Gastrocnemius medialis (tissue), 4 donors: ENCODE measurements at regions of chrX and their contacts with region 1.

Region 1: DNA sequence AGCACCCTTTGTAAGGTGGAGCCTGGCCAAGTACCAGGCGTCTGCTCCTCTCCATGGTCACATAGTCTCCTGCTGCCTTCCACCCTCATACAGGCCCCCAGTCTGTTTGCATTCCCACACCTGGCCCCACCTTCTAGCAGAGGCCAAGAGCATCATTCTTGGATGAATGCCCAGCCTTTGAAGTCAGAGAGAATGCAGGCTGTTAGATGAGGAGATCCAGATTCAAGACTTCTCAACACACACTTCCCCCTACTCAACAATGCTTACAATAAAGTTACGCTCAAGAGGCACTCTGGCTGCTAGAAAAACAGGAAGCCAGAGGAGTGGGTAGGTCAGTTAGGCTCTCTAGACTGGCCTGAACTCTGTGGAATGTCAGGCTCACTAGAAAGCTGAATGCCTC is 43.3 kb downstream of the SHROOM4 start:
- DNase-seq: no peak
- ATAC-seq: no peak
- H3K4me3 ChIP-seq: no peak overlapping the region
- H3K27ac ChIP-seq: no peak overlapping the region
- H3K4me1 ChIP-seq: no peaks in the 10 kb centered on the region
- H3K27me3 ChIP-seq: peaks cover 0 to 5% (median under 1%) of the 10 kb centered on the region in 3 donors
- CTCF ChIP-seq: no peak
- POLR2A ChIP-seq: no peak

Region 2: DNA sequence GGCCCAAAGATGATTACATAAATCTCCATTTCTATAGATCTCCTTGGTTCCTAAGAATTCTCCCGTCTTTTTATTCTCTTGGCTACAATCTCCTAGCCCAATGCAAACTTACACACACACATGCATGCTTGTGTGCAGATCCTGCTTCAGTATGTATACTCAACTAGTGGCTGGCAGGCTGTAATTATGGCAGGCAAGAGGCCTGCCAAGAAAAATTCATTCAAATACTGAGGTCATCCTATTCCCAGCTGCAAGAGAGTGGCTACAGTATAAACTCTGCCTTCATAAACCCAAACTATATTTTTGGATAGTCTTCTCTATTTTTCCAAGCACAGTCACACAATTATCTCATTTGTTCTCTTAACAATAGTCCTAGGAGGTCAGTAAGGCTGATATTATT is 51.9 kb before region 1 on chrX:
- in situ Hi-C with region 1: loop called in 1 of 4 experiments (anchors 10 kb)
- intact Hi-C with region 1: no loop called
- DNase-seq: no peak
- ATAC-seq: no peak
- H3K4me3 ChIP-seq: no peak overlapping the region
- H3K27ac ChIP-seq: no peak overlapping the region
- H3K4me1 ChIP-seq: no peaks in the 10 kb centered on the region
- H3K27me3 ChIP-seq: no peaks in the 10 kb centered on the region
- CTCF ChIP-seq: no peak
- POLR2A ChIP-seq: no peak

Region 3: DNA sequence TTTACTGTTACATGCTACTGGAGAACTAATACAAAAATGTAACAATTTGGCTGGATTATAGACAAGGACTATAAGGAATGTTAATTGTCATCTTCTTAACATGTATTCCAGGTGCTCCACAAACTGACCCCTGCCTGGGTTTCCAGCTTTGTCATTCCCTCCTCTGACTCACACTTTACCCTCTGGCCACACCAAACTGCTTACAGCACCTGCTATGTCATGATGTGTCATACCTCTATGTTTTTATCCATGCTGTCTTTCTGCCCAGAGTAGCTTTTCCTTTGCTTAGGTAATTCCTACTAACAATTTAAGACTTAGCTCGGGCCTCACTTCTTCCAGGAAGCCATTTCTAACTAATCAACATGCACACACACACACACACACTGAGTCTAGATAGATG is 57.3 kb after region 1 on chrX:
- in situ Hi-C with region 1: no loop called
- intact Hi-C with region 1: no loop called
- DNase-seq: no peak
- ATAC-seq: no peak
- H3K4me3 ChIP-seq: no peak overlapping the region
- H3K27ac ChIP-seq: no peak overlapping the region
- H3K4me1 ChIP-seq: no peaks in the 10 kb centered on the region
- H3K27me3 ChIP-seq: no peaks in the 10 kb centered on the region
- CTCF ChIP-seq: no peak
- POLR2A ChIP-seq: no peak